ENCODE measurements at regions of chr20 and their contacts with region 1.

Region 1: GRCh38 chr20:49610701-49611538 is 43.0 kb upstream of the PTGIS start:
- DNase-seq: peak; percentile 83
- ATAC-seq: peak; percentile 72
- H3K4me3 Mint-ChIP-seq: peak overlapping the region; percentile 52
- H3K27ac Mint-ChIP-seq: peak overlapping the region; percentile 30
- H3K4me1 Mint-ChIP-seq: peaks cover 24% of the 10 kb centered on the region
- H3K27me3 Mint-ChIP-seq: no peaks in the 10 kb centered on the region

Region 2: DNA sequence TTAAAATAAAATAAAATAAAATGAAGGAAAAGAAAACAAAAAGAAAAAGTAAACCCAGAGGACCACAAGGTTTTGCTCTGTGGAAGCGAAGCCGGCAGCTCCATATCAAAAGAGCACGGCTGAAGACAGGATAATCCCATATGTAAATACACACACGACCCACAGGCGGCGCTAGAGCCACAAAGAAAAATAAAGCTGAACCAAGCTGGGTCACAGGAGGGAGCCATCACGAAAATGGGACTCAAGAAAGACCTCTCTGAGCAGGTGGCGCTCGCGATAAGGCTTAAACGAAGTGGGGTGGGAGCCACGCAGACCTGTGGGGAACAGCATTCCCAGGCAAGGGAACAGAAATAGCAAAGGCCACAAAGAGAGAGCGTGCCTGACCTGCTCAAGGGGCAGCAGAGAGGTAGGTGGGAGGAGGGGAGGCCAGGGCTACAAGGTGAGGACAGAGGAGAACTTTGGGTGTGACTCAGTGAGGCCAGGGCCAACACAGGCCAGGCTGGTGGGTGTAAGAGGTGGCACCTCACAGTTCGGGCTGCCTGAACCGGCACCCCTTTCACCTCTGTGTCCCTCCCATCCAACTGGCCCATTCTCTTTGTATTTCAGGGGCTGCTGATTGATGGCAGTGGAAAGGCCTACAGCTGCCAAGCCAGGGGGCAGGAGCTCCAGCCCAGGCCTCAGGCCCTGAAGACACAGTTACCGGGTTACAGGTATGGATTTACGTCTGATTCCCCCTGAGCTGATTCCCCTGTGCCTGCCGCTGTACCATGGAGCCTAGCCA is 69.0 kb before region 1 on chr20:
- CTCF ChIA-PET with region 1: interaction called, 459 read pairs
- POLR2A ChIA-PET with region 1: interaction called, 5 read pairs
- DNase-seq: peak; percentile 86
- ATAC-seq: peak; percentile 75
- H3K4me3 Mint-ChIP-seq: no peak overlapping the region
- H3K27ac Mint-ChIP-seq: peak overlapping the region; percentile 91
- H3K4me1 Mint-ChIP-seq: peaks cover 26% of the 10 kb centered on the region
- H3K27me3 Mint-ChIP-seq: no peaks in the 10 kb centered on the region

Region 3: GRCh38 chr20:49568471-49569161 is 42.3 kb before region 1 on chr20:
- CTCF ChIA-PET with region 1: interaction called, 20 read pairs
- POLR2A ChIA-PET with region 1: no interaction called
- DNase-seq: no peak
- ATAC-seq: peak; percentile 6
- H3K4me3 Mint-ChIP-seq: peak overlapping the region; percentile 28
- H3K27ac Mint-ChIP-seq: peak overlapping the region; percentile 25
- H3K4me1 Mint-ChIP-seq: peaks cover 37% of the 10 kb centered on the region
- H3K27me3 Mint-ChIP-seq: peaks cover 39% of the 10 kb centered on the region

Region 4: GRCh38 chr20:49594143-49594930 is 16.6 kb before region 1 on chr20:
- CTCF ChIA-PET with region 1: interaction called, 65 read pairs
- POLR2A ChIA-PET with region 1: interaction called, 3 read pairs
- DNase-seq: peak; percentile 93
- ATAC-seq: peak; percentile 74
- H3K4me3 Mint-ChIP-seq: peak overlapping the region; percentile 81
- H3K27ac Mint-ChIP-seq: peak overlapping the region; percentile 96
- H3K4me1 Mint-ChIP-seq: peaks cover 87% of the 10 kb centered on the region
- H3K27me3 Mint-ChIP-seq: no peaks in the 10 kb centered on the region

Region 5: GRCh38 chr20:49742948-49743347 is 132.0 kb after region 1 on chr20:
- CTCF ChIA-PET with region 1: no interaction called
- POLR2A ChIA-PET with region 1: no interaction called
- DNase-seq: no peak
- ATAC-seq: no peak
- H3K4me3 Mint-ChIP-seq: no peak overlapping the region
- H3K27ac Mint-ChIP-seq: no peak overlapping the region
- H3K4me1 Mint-ChIP-seq: no peaks in the 10 kb centered on the region
- H3K27me3 Mint-ChIP-seq: peaks cover 11% of the 10 kb centered on the region

Region 6: DNA sequence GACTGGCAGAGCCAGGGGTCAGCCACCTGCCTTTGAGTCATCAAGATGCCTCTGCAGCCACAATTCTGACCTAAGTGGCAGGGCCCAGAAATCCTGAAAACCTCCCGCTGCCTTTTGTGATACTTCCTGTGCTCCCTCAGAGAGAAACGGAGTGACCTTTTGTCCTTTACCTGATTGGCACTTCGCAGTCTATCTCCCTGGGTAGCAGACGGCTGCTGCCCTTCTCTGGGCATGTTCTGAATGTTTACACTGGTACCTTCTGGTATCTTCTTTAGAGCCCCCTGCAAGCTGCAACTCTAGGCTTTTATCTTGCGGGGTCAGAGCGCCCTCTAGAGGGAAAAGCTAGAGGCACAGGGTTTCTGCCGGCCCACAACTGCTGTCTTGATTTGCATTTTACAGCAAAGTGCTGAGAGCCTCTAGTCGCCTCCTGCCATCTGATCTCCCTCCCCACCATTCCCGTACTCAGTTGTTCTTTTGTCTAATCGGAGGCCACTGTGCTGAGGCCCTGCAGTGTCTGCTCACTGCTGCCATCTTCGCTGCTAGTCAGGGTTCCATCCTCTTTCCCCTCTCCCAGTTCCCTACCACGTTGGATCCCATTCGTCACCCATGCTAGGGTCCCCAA is 277.5 kb after region 1 on chr20:
- CTCF ChIA-PET with region 1: interaction called, 28 read pairs
- POLR2A ChIA-PET with region 1: no interaction called
- DNase-seq: peak; percentile 69
- ATAC-seq: peak; percentile 44
- H3K4me3 Mint-ChIP-seq: no peak overlapping the region
- H3K27ac Mint-ChIP-seq: peak overlapping the region; percentile 50
- H3K4me1 Mint-ChIP-seq: peaks cover 24% of the 10 kb centered on the region
- H3K27me3 Mint-ChIP-seq: no peaks in the 10 kb centered on the region

Measured in activated CD8-positive, alpha-beta T cell treated with anti-CD3 and anti-CD28 coated beads, Interleukin-2, amount 10 ng/mL, durations not matched to agents 7 days and 5 days (primary cell).